ENCODE measurements at regions of chr10 and their contacts with region 1.

Region 1: GRCh38 chr10:102420810-102421644 is at the start of gene FBXL15:
- DNase-seq: peak; percentile 92
- H3K4me3 ChIP-seq: peak within 1 kb of the TSS; percentile 92
- H3K27ac ChIP-seq: peak within 1 kb of the TSS; percentile 84
- H3K27me3 ChIP-seq: peaks cover 21% of the 10 kb centered on the region
- CTCF ChIP-seq: no peak
- polyA plus RNA-seq, gene FBXL15: 2.7 and 4.3 TPM in 2 replicates

Region 2: DNA sequence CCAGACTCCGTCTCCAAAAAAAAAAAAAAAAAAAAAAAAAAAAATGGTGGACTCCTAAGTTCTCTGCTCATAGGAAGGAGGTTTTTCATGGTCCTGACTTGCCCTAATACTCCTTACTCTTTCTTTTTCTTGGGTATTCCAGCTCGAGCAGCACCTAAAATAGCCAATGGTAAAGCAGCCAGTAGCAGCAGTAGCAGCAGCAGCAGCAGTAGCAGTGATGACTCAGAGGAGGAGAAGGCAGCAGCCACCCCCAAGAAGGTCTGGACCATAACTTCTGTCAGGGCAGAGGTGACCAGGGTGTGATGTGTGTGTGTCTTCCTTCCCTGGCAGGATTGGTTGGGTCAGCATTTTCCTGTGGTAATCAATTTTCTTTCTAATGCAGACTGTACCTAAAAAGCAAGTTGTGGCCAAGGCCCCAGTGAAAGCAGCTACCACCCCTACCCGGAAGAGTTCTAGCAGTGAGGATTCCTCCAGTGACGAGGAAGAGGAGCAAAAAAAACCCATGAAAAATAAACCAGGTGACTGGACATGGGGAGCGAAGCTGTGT is 261.9 kb before region 1 on chr10:
- CTCF ChIA-PET with region 1: no interaction called
- POLR2A ChIA-PET with region 1: no interaction called
- DNase-seq: no peak
- H3K4me3 ChIP-seq: no peak overlapping the region
- H3K27ac ChIP-seq: no peak overlapping the region
- H3K27me3 ChIP-seq: no peaks in the 10 kb centered on the region
- CTCF ChIP-seq: no peak

Region 3: GRCh38 chr10:102394079-102394800 is 26.8 kb before region 1 on chr10:
- CTCF ChIA-PET with region 1: interaction called, 33 read pairs
- POLR2A ChIA-PET with region 1: no interaction called
- DNase-seq: peak; percentile 82
- H3K4me3 ChIP-seq: peak overlapping the region; percentile 82
- H3K27ac ChIP-seq: peak overlapping the region; percentile 99
- H3K27me3 ChIP-seq: peaks cover 3% of the 10 kb centered on the region
- CTCF ChIP-seq: no peak

Region 4: DNA sequence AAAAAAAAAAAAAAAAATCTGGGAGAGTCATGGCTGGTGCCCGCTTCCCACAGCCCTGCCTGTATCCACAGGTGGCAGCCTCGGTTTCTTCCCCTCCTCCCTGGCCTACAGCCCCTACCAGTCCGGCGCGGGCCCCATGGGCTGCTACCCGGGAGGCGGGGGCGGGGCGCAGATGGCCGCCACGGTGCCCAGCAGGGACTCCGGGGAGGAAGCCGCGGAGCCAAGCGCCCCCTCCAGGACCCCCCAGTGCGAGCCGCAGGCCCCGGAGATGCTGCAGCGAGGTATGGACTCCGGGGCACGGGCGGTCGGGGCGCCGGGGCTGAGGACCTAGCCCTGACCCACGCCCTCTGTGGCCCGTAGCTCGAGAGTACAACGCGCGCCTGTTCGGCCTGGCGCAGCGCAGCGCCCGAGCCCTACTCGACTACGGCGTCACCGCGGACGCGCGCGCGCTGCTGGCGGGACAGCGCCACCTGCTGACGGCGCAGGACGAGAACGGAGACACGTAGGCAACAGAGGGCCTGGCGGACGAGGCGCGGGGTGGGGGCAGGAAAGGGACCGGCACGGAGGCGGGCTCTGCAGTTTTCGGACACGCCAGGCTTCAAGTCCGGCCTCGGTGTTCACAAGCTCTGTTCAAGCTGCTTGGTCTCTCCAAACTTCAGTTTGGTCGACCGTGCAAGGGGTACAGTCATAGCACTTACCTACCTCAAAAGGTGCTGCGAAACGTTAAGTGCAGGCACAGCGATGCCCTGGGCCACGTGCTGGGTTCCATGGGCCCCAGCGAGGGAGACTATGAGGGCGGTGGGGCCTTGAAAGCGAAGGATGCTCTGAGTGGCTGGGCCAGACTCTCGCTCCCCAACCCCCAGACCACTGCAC is 21.6 kb before region 1 on chr10:
- CTCF ChIA-PET with region 1: interaction called, 33 read pairs
- POLR2A ChIA-PET with region 1: interaction called, 10 read pairs
- DNase-seq: peak; percentile 59
- H3K4me3 ChIP-seq: peak overlapping the region; percentile 50
- H3K27ac ChIP-seq: peak overlapping the region; percentile 47
- H3K27me3 ChIP-seq: no peaks in the 10 kb centered on the region
- CTCF ChIP-seq: peak; percentile 78

Region 5: GRCh38 chr10:102408728-102409603 is 12.1 kb before region 1 on chr10:
- CTCF ChIA-PET with region 1: interaction called, 5 read pairs
- POLR2A ChIA-PET with region 1: interaction called, 10 read pairs
- DNase-seq: no peak
- H3K4me3 ChIP-seq: peak overlapping the region; percentile 59
- H3K27ac ChIP-seq: peak overlapping the region; percentile 11
- H3K27me3 ChIP-seq: peaks cover 31% of the 10 kb centered on the region
- CTCF ChIP-seq: no peak

Region 6: GRCh38 chr10:102432162-102432950 is 11.3 kb after region 1 on chr10 and contains the start of gene CUEDC2:
- CTCF ChIA-PET with region 1: interaction called, 21 read pairs
- POLR2A ChIA-PET with region 1: interaction called, 31 read pairs
- DNase-seq: peak; percentile 93
- H3K4me3 ChIP-seq: peak within 1 kb of the TSS; percentile 93
- H3K27ac ChIP-seq: peak within 1 kb of the TSS; percentile 73
- H3K27me3 ChIP-seq: no peaks in the 10 kb centered on the region
- CTCF ChIP-seq: no peak
- polyA plus RNA-seq, gene CUEDC2: 61.1 and 68.6 TPM in 2 replicates

Region 7: GRCh38 chr10:102476466-102477141 is 55.6 kb after region 1 on chr10:
- CTCF ChIA-PET with region 1: interaction called, 10 read pairs
- POLR2A ChIA-PET with region 1: interaction called, 6 read pairs
- DNase-seq: no peak
- H3K4me3 ChIP-seq: no peak overlapping the region
- H3K27ac ChIP-seq: no peak overlapping the region
- H3K27me3 ChIP-seq: no peaks in the 10 kb centered on the region
- CTCF ChIP-seq: no peak

Measured in AG04450 (cell line).